Heart left ventricle (tissue), 16 donors: ENCODE measurements at regions of chr4 and their contacts with region 1.

Region 1: GRCh38 chr4:74123065-74123728 is 24.2 kb upstream of the CXCL2 start:
- DNase-seq: peak in 1 of 5 donors; percentile 30
- ATAC-seq: peak; percentile 64 to 78 (median 70)
- H3K4me3 ChIP-seq: no peak overlapping the region
- H3K27ac ChIP-seq: no peak overlapping the region
- H3K4me1 ChIP-seq: peaks cover 0 to 11% (median under 1%) of the 10 kb centered on the region in 12 donors
- H3K27me3 ChIP-seq: no peaks in the 10 kb centered on the region
- CTCF ChIP-seq: no peak
- POLR2A ChIP-seq: no peak

Region 2: DNA sequence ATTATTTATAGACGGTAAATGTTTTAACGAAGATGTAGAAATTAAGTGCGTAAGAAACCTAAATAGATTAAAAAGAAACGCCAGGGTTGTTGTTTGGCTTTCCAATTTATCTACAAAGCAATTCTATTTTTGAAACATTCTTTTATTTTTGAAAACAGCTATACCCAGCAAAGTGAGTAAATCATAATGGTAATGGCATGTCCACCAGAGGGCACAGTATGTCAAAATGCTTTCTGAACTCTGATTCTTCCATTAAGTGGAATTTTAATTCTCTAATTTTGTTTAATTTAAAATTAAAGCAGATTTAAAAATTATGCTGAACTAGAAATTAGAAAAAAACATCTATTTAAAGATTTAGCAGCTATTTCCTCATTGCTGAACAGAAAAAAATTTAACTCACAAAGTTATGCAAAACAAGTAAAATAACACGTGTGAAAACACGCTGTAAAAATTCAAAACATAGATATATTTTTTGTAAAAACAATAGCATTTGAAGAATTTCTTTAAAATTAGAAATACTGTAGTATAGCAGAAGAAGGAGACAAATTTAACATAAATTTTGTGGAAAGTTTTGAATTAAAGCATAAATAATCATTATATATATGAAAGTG is 529.5 kb before region 1 on chr4:
- intact Hi-C with region 1: loop called in 1 of 10 experiments (anchors 10 kb)
- DNase-seq: no peak
- ATAC-seq: no peak
- H3K4me3 ChIP-seq: no peak overlapping the region
- H3K27ac ChIP-seq: no peak overlapping the region
- H3K4me1 ChIP-seq: no peaks in the 10 kb centered on the region
- H3K27me3 ChIP-seq: no peaks in the 10 kb centered on the region
- CTCF ChIP-seq: peak in 11 of 12 donors; percentile 7 to 60 (median 45)
- POLR2A ChIP-seq: no peak

Region 3: GRCh38 chr4:73869130-73870050 is 253.8 kb before region 1 on chr4 and contains the start of gene CXCL1:
- intact Hi-C with region 1: loop called in 1 of 10 experiments (anchors 10 kb)
- DNase-seq: peak; percentile 23 to 71 (median 59)
- ATAC-seq: peak; percentile 45 to 80 (median 74)
- H3K4me3 ChIP-seq: peak within 1 kb of the TSS; percentile 51 to 80 (median 64)
- H3K27ac ChIP-seq: peak within 1 kb of the TSS in 11 of 12 donors; percentile 32 to 75 (median 59)
- H3K4me1 ChIP-seq: peaks cover 0 to 23% (median 5%) of the 10 kb centered on the region in 12 donors
- H3K27me3 ChIP-seq: peaks cover 0 to 21% (median 0%) of the 10 kb centered on the region in 9 donors
- CTCF ChIP-seq: peak in 1 of 12 donors; percentile 11
- POLR2A ChIP-seq: no peak
- total RNA-seq, gene CXCL1: 0.26 to 14.9 (median 1.5) TPM in 8 of 9 donors, not detected in the other